Left ventricle myocardium superior (tissue), 1 donor: ENCODE measurements at regions of chr17 and their contacts with region 1.

Region 1: DNA sequence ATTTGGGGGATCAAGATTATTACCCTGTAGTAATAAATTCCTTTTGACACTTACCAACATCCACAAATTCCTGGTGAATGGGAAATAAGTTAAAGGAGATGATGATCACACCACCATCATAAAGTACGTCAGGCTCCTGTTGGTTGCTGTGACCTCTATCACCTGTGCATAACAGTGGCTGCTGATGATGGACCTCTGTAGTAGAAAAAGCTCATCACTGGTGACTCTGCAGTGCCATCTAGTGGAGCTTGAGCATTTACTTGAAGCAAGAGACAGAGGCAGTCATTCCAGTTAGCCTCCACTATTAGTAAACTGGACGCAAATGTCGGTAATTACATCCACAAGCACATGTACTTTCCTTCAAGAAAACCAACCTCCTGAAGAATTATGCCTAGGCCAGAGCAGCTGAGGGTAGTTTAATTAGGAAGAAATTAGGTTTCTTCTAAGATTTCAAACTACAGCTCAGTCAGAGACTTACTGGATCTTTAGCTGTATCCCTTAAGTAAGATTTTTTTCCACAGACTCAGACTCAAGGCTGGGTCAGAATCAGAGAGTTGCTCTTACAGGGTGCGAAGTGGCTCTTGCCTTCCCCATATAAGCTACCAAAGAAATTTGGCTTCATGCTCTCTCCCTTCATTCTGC is 39.3 kb downstream of the CYB561 start:
- DNase-seq: no peak
- ATAC-seq: peak; percentile 84

Region 2: GRCh38 chr17:62671583-62672312 is 735.1 kb before region 1 on chr17:
- intact Hi-C with region 1: loop called (anchors 10 kb)
- DNase-seq: no peak
- ATAC-seq: peak; percentile 24

Region 3: GRCh38 chr17:63082273-63082993 is 324.4 kb before region 1 on chr17:
- intact Hi-C with region 1: loop called (anchors 10 kb)
- DNase-seq: no peak
- ATAC-seq: no peak

Region 4: GRCh38 chr17:63140255-63140654 is 266.6 kb before region 1 on chr17:
- intact Hi-C with region 1: no loop called
- DNase-seq: no peak
- ATAC-seq: no peak

Region 5: GRCh38 chr17:63275318-63275970 is 131.4 kb before region 1 on chr17:
- intact Hi-C with region 1: loop called (anchors 10 kb)
- DNase-seq: no peak
- ATAC-seq: peak; percentile 80